ENCODE measurements at regions of chr5 and their contacts with region 1.

Region 1: DNA sequence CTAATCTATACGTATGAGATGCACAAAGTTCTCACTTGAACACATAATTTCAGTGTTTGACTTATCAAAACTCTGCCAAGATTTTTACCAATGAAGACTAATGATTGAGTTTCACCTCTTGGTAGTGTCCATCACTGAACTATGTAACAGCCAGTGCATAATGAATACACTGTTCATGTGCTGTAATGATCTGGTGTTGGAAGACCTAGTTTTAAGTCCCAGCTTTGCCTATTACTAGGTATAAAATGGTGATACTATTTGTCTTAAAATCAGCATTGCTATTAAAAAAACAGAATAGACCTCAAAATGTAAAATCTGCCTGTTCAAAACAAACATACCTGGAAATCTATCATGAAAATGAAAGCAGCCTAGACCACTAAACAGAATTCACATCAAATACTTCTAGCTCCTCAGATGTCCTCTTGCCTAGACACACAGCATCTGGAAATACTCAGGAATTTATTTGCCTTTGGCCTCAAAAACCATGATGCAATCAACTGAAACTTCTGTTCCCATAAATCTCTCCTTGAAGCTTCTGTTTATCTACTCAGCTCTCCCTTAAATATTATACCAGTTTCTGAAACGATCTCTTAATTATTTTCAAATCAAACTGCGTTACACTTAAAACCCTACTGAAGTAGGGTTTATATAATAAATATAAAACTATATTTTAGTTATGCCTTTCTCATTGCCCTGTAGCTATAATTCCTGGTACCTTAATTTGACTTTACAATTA is 38.1 kb downstream of the MRPS27 start:
- DNase-seq: no peak
- ATAC-seq: no peak
- H3K4me3 ChIP-seq: no peak overlapping the region
- H3K4me3 Mint-ChIP-seq: no peak overlapping the region
- H3K27ac ChIP-seq: no peak overlapping the region
- H3K27ac Mint-ChIP-seq: no peak overlapping the region
- H3K4me1 ChIP-seq: no peaks in the 10 kb centered on the region
- H3K4me1 Mint-ChIP-seq: peaks cover 2 to 6% (median 4%) of the 10 kb centered on the region in 3 donors
- H3K27me3 ChIP-seq: no peaks in the 10 kb centered on the region
- H3K27me3 Mint-ChIP-seq: no peaks in the 10 kb centered on the region

Region 2: DNA sequence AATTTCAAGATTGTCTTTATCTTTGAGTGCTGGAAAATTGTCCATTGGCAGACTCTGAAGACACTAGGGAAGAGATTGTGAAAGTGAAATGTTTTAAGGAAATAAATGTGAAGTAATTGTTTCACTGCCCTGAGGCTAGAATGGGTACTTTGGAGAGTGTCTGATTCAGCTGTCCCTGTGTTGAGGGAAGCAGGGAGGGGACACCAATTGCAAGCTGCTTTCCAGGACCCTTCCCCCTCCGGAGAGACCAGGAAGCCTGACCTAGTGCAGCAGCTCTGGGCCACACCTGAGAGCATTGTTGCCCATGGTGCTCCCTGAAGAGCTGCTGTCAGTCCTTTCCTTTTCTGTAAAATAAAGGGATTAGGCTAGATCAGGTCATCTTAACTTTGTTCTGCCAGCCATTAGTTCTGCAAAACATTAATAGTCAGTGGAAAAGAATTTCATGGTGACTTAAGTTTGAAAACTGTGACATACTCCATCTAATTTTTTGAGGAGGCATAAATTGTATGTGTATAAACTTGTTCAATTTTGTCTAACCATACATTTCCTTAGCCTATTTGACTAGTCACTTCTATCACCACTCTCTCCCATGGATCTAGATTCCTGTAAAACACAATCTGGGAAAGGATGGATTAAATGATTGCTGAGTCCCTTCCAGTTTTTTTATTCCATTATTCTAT is 155.9 kb before region 1 on chr5:
- CTCF ChIA-PET with region 1: no interaction called
- POLR2A ChIA-PET with region 1: no interaction called
- DNase-seq: no peak
- ATAC-seq: no peak
- H3K4me3 ChIP-seq: no peak overlapping the region
- H3K4me3 Mint-ChIP-seq: no peak overlapping the region
- H3K27ac ChIP-seq: no peak overlapping the region
- H3K27ac Mint-ChIP-seq: no peak overlapping the region
- H3K4me1 ChIP-seq: no peaks in the 10 kb centered on the region
- H3K4me1 Mint-ChIP-seq: no peaks in the 10 kb centered on the region
- H3K27me3 ChIP-seq: peaks cover 6 to 10% of the 10 kb centered on the region in 2 experiments
- H3K27me3 Mint-ChIP-seq: peaks cover 34 to 57% of the 10 kb centered on the region in 2 donors

Region 3: DNA sequence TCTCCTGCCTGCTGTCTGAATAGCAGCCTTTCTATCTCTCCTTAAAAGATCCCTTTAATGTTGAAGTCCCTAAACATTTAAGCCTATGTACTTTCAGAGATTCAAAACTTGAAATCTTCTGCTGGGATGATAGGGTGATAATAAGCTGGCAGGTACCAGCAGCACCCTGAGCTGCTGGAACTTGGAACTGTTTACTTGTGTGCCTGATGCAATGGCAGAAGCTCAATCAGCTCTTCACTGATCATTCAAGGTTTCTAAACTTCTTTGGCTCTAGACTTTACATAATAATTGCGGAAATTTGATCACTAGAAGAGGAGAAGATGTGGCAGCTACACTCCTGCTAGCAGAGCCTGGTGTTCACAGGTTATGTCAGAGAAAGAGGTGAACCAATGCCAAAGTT is 10.5 kb after region 1 on chr5:
- CTCF ChIA-PET with region 1: no interaction called
- POLR2A ChIA-PET with region 1: interaction called in 1 of 2 experiments, 13 read pairs
- DNase-seq: no peak
- ATAC-seq: no peak
- H3K4me3 ChIP-seq: no peak overlapping the region
- H3K4me3 Mint-ChIP-seq: no peak overlapping the region
- H3K27ac ChIP-seq: no peak overlapping the region
- H3K27ac Mint-ChIP-seq: no peak overlapping the region
- H3K4me1 ChIP-seq: no peaks in the 10 kb centered on the region
- H3K4me1 Mint-ChIP-seq: peaks cover 0 to 6% (median 0%) of the 10 kb centered on the region in 3 donors
- H3K27me3 ChIP-seq: no peaks in the 10 kb centered on the region
- H3K27me3 Mint-ChIP-seq: no peaks in the 10 kb centered on the region